Activated naive CD4-positive, alpha-beta T cell treated with anti-CD3 and anti-CD28 coated beads for 36 hours (primary cell): ENCODE measurements at regions of chr12 and their contacts with region 1.

Region 1: GRCh38 chr12:12032851-12033588 is 37.7 kb upstream of the BCL2L14 start:
- DNase-seq: peak; percentile 86
- H3K4me3 Mint-ChIP-seq: peak overlapping the region; percentile 66
- H3K27ac Mint-ChIP-seq: peak overlapping the region; percentile 78
- H3K4me1 Mint-ChIP-seq: peaks cover 46% of the 10 kb centered on the region
- H3K27me3 Mint-ChIP-seq: no peaks in the 10 kb centered on the region

Region 2: GRCh38 chr12:11500178-11500860 is 532.7 kb before region 1 on chr12:
- CTCF ChIA-PET with region 1: interaction called, 3 read pairs
- intact Hi-C with region 1: loop called (anchors 2 kb)
- DNase-seq: peak; percentile 90
- H3K4me3 Mint-ChIP-seq: no peak overlapping the region
- H3K27ac Mint-ChIP-seq: no peak overlapping the region
- H3K4me1 Mint-ChIP-seq: peaks cover 6% of the 10 kb centered on the region
- H3K27me3 Mint-ChIP-seq: peaks cover 42% of the 10 kb centered on the region

Region 3: GRCh38 chr12:11648831-11649702 is 384.0 kb before region 1 on chr12 and contains the start of gene ETV6:
- CTCF ChIA-PET with region 1: interaction called, 4 read pairs
- intact Hi-C with region 1: loop called (anchors 1 kb)
- DNase-seq: peak; percentile 90
- H3K4me3 Mint-ChIP-seq: peak within 1 kb of the TSS; percentile 98
- H3K27ac Mint-ChIP-seq: peak within 1 kb of the TSS; percentile 99
- H3K4me1 Mint-ChIP-seq: peaks cover 27% of the 10 kb centered on the region
- H3K27me3 Mint-ChIP-seq: no peaks in the 10 kb centered on the region
- total RNA-seq, gene ETV6: 48.1 to 48.6 TPM

Region 4: GRCh38 chr12:11786638-11787365 is 246.2 kb before region 1 on chr12:
- CTCF ChIA-PET with region 1: no interaction called
- intact Hi-C with region 1: no loop called
- DNase-seq: no peak
- H3K4me3 Mint-ChIP-seq: no peak overlapping the region
- H3K27ac Mint-ChIP-seq: no peak overlapping the region
- H3K4me1 Mint-ChIP-seq: peaks cover 41% of the 10 kb centered on the region
- H3K27me3 Mint-ChIP-seq: no peaks in the 10 kb centered on the region

Region 5: GRCh38 chr12:11836282-11837151 is 196.5 kb before region 1 on chr12:
- CTCF ChIA-PET with region 1: interaction called, 6 read pairs
- intact Hi-C with region 1: loop called (anchors 1 kb)
- DNase-seq: peak; percentile 92
- H3K4me3 Mint-ChIP-seq: no peak overlapping the region
- H3K27ac Mint-ChIP-seq: peak overlapping the region; percentile 97
- H3K4me1 Mint-ChIP-seq: peaks cover 68% of the 10 kb centered on the region
- H3K27me3 Mint-ChIP-seq: no peaks in the 10 kb centered on the region

Region 6: GRCh38 chr12:11981121-11981733 is 51.8 kb before region 1 on chr12:
- CTCF ChIA-PET with region 1: interaction called, 7 read pairs
- intact Hi-C with region 1: loop called (anchors 1 kb)
- DNase-seq: peak; percentile 72
- H3K4me3 Mint-ChIP-seq: no peak overlapping the region
- H3K27ac Mint-ChIP-seq: peak overlapping the region; percentile 98
- H3K4me1 Mint-ChIP-seq: peaks cover 51% of the 10 kb centered on the region
- H3K27me3 Mint-ChIP-seq: no peaks in the 10 kb centered on the region

Region 7: DNA sequence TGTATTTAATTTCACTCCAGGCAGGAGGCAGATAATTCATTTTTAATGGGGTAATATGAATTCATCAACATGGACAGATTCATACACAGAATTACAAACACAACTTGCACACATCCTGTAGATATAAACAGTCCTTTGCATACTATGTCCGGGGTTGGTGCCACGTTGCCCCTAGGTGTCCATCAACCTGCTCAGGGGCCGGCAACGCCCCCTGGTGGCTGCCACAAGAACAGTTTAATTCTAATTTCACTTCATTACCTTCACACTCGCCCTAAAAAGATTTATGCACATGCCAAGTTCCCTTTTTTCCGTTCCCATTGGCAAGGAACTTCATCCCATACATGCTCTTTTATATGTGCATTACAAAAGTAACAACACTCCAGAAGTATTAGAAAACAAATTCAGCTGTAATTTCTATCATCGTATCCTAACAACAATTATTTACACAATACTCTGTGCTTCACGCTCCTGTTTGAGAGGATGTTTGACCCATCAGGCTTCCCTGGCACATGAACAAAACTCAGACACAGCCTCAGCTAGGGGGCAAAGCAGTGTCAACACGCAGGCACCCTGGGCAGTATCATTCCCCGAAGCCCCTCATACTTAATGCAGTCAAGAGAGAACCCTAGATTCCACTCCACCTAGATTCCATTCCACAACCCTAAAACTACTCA is 301.5 kb after region 1 on chr12:
- CTCF ChIA-PET with region 1: interaction called, 36 read pairs
- intact Hi-C with region 1: loop called (anchors 2 kb)
- DNase-seq: peak; percentile 74
- H3K4me3 Mint-ChIP-seq: no peak overlapping the region
- H3K27ac Mint-ChIP-seq: no peak overlapping the region
- H3K4me1 Mint-ChIP-seq: peaks cover 27% of the 10 kb centered on the region
- H3K27me3 Mint-ChIP-seq: no peaks in the 10 kb centered on the region